ENCODE measurements at regions of chr9 and their contacts with region 1.

Region 1: GRCh38 chr9:99199938-99200539 is 21.7 kb downstream of the ALG2 start:
- DNase-seq: no peak
- H3K4me3 ChIP-seq: no peak overlapping the region
- H3K27ac ChIP-seq: no peak overlapping the region
- H3K4me1 ChIP-seq: no peaks in the 10 kb centered on the region
- H3K27me3 ChIP-seq: no peaks in the 10 kb centered on the region
- CTCF ChIP-seq: no peak

Region 2: DNA sequence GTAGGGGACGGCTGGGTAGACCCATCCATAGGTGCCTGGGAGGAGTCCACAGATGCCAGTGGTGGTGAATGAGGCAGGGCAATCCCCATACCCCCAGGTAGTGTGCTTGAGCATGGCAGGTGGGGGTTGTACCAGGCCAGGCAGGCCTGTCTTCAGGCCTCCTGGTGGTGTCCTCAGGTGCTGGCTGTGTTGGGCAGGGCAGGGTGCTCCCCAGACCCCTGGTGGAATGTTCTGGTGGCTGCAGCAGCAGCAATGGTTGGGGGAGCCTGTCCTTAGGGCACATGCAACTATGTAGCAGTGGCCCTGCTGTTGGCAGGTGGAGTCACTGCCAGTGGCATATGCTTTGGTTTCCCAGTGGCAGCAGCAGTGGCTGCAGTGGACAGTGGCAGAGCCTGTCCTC is 11.7 kb after region 1 on chr9:
- CTCF ChIA-PET with region 1: no interaction called
- POLR2A ChIA-PET with region 1: interaction called, 10 read pairs
- intact Hi-C with region 1: no loop called
- DNase-seq: no peak
- H3K4me3 ChIP-seq: no peak overlapping the region
- H3K27ac ChIP-seq: no peak overlapping the region
- H3K4me1 ChIP-seq: no peaks in the 10 kb centered on the region
- H3K27me3 ChIP-seq: no peaks in the 10 kb centered on the region
- CTCF ChIP-seq: no peak